Activated CD8-positive, alpha-beta T cell treated with anti-CD3 and anti-CD28 coated beads for 36 hours (primary cell): ENCODE measurements at regions of chr11 and their contacts with region 1.

Region 1: GRCh38 chr11:72483412-72484186 is 49.3 kb upstream of the CLPB start:
- DNase-seq: peak; percentile 19
- ATAC-seq: peak; percentile 74
- H3K4me3 Mint-ChIP-seq: no peak overlapping the region
- H3K27ac Mint-ChIP-seq: peak overlapping the region; percentile 26
- H3K4me1 Mint-ChIP-seq: peaks cover 14% of the 10 kb centered on the region
- H3K27me3 Mint-ChIP-seq: peaks cover 2% of the 10 kb centered on the region
- CTCF ChIP-seq: no peak

Region 2: DNA sequence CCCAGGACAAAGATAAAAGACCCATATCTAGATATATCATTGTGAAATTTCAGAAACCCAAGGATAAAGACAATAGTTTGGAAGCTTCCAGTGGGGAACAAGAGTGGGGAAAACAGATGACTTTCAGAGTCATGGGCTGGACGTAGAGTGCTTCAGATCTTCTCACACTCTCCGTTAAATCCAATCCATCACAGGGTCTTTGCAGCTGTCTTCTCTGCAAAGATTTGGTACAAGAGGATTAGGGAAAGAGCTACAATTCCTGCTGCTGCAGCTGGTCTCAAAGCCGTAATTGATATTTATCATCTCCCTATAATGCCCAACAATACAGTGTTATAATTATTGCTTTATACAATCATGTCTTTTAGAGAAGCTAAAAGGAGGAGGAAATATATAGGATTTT is 14.1 kb after region 1 on chr11:
- CTCF ChIA-PET with region 1: no interaction called
- POLR2A ChIA-PET with region 1: no interaction called
- intact Hi-C with region 1: no loop called
- DNase-seq: no peak
- ATAC-seq: no peak
- H3K4me3 Mint-ChIP-seq: no peak overlapping the region
- H3K27ac Mint-ChIP-seq: no peak overlapping the region
- H3K4me1 Mint-ChIP-seq: peaks cover 8% of the 10 kb centered on the region
- H3K27me3 Mint-ChIP-seq: no peaks in the 10 kb centered on the region
- CTCF ChIP-seq: no peak

Region 3: DNA sequence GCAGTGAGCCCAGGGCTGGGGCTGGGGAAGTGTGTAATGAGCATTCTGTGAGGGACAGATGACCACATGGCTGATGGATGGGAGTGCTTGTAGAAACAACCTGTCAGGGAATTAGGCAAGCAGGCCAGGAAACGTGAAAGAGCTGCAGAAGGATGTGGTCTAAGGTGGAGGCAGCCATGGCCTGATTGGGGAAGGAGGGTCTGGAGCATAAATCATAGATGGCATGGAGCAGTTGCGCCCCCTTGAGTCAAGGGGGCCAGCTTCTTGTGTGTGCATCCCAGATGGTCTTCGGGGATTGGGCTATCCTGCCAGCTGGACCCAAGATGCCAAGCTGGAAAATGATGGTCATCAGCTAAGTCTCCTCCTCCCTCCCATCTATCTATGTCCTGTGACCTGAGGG is 70.1 kb after region 1 on chr11:
- CTCF ChIA-PET with region 1: interaction called, 23 read pairs
- POLR2A ChIA-PET with region 1: no interaction called
- intact Hi-C with region 1: loop called (anchors 5 kb)
- DNase-seq: peak; percentile 71
- ATAC-seq: peak; percentile 64
- H3K4me3 Mint-ChIP-seq: no peak overlapping the region
- H3K27ac Mint-ChIP-seq: no peak overlapping the region
- H3K4me1 Mint-ChIP-seq: no peaks in the 10 kb centered on the region
- H3K27me3 Mint-ChIP-seq: peaks cover 6% of the 10 kb centered on the region
- CTCF ChIP-seq: peak; percentile 54

Region 4: GRCh38 chr11:72642884-72643511 is 159.4 kb after region 1 on chr11:
- CTCF ChIA-PET with region 1: interaction called, 3 read pairs
- POLR2A ChIA-PET with region 1: no interaction called
- intact Hi-C with region 1: loop called (anchors 5 kb)
- DNase-seq: peak; percentile 70
- ATAC-seq: peak; percentile 90
- H3K4me3 Mint-ChIP-seq: peak overlapping the region; percentile 57
- H3K27ac Mint-ChIP-seq: no peak overlapping the region
- H3K4me1 Mint-ChIP-seq: no peaks in the 10 kb centered on the region
- H3K27me3 Mint-ChIP-seq: no peaks in the 10 kb centered on the region
- CTCF ChIP-seq: peak; percentile 100